Heart right ventricle (tissue), 16 donors: ENCODE measurements at regions of chr14 and their contacts with region 1.

Region 1: DNA sequence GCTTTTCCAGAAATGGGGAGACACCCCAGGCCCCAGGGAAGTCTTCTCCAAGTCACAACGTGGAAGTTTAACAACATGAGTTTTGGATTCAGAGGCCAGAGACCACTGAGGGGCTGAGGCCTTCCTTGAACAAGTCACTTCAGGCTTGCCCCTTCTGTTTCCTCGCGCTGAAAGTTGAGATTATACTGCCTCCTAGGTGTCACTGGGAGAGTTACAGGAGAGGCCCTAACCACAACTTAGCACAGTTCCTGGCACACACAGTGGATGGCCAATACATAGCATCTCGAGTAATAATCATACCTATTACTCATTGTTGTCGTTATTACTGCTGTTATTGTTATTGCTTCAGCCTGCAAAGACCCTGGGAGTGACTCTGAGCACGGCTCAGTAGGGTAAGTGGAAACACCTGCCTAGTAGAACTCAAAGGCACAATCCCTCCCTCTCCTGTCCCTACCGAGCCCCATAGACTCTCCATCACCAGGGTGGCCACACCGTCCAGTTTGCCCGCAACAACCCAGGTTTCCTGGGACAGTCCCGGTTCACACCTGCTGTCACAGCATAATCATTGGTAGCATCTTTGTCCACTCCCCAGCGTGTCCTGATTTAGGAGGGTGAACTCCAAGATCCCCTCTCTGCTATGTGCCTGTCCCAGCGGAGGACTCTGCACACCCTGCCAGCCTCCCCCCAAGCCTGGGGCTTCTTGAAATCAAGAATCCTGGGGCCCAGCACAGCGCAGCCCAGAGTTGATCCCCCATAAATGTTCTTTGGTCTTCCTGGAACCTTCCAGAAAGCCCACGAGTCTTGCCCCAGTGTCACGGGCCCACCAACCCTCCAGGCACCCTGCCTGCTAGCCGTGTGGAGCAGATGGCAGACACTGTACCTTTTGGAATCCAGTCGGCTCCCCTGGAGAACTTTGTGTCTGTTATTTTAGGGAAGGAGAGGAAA is 85.0 kb downstream of the SYNE3 start:
- DNase-seq: no peak
- ATAC-seq: peak; percentile 47 to 84 (median 60)
- H3K4me3 ChIP-seq: no peak overlapping the region
- H3K27ac ChIP-seq: peak overlapping the region in 6 of 10 donors; percentile 8 to 58 (median 37)
- H3K4me1 ChIP-seq: peaks cover 0 to 14% (median 5%) of the 10 kb centered on the region in 9 donors
- H3K27me3 ChIP-seq: no peaks in the 10 kb centered on the region
- CTCF ChIP-seq: peak; percentile 28 to 68 (median 55)

Region 2: DNA sequence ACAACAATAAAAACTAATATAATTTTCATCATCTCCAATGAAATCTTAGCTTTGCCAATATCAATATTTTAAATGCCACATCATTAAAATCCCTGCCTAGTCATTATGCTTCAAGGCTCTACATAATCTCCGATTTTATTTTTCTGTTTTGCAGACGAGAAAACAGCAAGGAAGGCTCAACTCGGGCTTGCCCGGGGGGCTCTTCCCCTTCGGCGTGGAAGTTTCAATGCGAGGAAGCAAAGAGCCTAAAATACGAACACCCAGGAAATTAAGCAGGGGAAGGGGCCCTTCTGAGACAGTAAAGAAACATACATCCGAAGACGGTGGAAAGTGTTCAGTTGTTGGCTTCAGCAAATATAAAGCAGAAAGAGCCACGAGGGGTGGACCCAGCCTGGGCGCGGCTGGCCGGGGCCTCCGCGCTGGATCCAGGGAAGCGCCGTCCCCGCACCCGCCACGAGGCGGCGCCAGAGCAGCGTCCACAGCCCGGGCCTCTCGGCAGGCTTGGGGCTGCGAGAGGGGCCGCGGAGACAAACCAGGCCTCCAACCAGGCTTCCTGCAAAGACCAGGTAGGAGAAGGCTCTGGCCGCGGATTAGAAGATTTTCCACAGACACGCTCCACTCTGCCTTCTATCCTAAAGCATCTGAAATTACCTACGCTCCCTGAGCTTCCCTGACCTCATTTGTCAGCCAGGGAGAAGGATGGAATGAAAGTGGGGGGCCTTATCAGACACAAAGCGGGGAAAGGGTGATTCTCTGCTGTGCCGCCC is 742.1 kb before region 1 on chr14:
- intact Hi-C with region 1: loop called (anchors 2 to 10 kb)
- DNase-seq: peak; percentile 38 to 68
- ATAC-seq: peak; percentile 89 to 95 (median 92)
- H3K4me3 ChIP-seq: peak overlapping the region in 4 of 10 donors; percentile 13 to 34 (median 16)
- H3K27ac ChIP-seq: no peak overlapping the region
- H3K4me1 ChIP-seq: peaks cover 0 to 10% (median 4%) of the 10 kb centered on the region in 9 donors
- H3K27me3 ChIP-seq: peaks cover 0 to 32% (median 20%) of the 10 kb centered on the region in 7 donors
- CTCF ChIP-seq: peak; percentile 85 to 99 (median 96)

Region 3: GRCh38 chr14:94904636-94905035 is 526.8 kb before region 1 on chr14:
- intact Hi-C with region 1: loop called in 2 of 10 experiments (anchors 5 to 10 kb)
- DNase-seq: no peak
- ATAC-seq: no peak
- H3K4me3 ChIP-seq: no peak overlapping the region
- H3K27ac ChIP-seq: no peak overlapping the region
- H3K4me1 ChIP-seq: no peaks in the 10 kb centered on the region
- H3K27me3 ChIP-seq: peaks cover 0 to 26% (median 5%) of the 10 kb centered on the region in 7 donors
- CTCF ChIP-seq: no peak

Region 4: DNA sequence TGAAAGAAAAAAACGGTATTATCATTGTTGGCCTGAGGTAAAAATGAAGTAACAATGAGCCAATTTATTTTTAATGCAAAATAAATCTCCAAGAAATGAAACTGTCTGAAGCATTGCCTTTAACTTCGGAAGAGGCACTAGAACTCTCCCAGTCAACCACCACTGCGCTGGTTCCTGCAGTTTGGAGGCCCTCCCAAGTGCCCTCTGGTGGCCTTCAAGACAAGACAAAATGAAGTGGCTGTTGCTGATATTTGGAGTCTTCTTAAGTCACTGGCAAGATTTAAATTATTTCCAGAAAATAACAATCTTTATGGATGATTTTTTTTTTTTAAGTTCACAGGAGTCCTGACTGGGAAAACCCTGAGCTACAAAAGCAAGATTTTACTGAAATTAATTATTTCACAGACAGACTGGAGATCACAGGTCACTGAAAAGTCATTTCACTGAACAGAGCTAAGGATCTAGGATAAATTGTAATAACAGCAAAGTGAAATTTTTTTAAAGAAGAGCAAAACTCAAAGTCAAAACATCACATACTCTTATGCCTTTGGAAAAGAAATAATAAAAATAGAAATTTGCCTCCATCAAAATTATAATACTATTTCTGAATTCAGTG is 332.4 kb before region 1 on chr14:
- intact Hi-C with region 1: loop called in 8 of 10 experiments (anchors 5 to 10 kb)
- DNase-seq: peak; percentile 57 to 65
- ATAC-seq: peak in 7 of 8 donors; percentile 66 to 85 (median 72)
- H3K4me3 ChIP-seq: no peak overlapping the region
- H3K27ac ChIP-seq: no peak overlapping the region
- H3K4me1 ChIP-seq: peaks cover 0 to 32% (median 17%) of the 10 kb centered on the region in 9 donors
- H3K27me3 ChIP-seq: no peaks in the 10 kb centered on the region
- CTCF ChIP-seq: peak; percentile 64 to 86 (median 75)

Region 5: DNA sequence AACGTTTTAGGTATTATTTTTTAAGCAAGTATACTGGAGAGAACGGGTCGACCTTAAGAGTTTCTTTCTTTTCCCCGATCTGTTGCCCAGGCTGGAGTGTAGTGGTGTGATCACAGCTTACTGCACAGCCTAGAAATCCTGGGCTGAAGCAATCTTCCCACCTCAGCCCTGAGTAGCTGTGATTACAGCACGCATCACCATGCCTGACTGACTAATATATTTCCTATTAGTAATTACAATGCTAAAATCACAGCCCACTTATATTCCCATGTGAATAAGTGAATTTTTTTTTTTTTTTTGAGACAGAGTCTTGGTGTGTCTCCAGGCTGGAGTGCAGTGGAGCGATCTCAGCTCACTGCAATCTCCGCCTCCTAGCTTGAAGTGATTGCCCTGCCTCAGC is 324.5 kb before region 1 on chr14:
- intact Hi-C with region 1: loop called in 4 of 10 experiments (anchors 5 to 10 kb)
- DNase-seq: no peak
- ATAC-seq: no peak
- H3K4me3 ChIP-seq: no peak overlapping the region
- H3K27ac ChIP-seq: no peak overlapping the region
- H3K4me1 ChIP-seq: no peaks in the 10 kb centered on the region
- H3K27me3 ChIP-seq: no peaks in the 10 kb centered on the region
- CTCF ChIP-seq: no peak

Region 6: DNA sequence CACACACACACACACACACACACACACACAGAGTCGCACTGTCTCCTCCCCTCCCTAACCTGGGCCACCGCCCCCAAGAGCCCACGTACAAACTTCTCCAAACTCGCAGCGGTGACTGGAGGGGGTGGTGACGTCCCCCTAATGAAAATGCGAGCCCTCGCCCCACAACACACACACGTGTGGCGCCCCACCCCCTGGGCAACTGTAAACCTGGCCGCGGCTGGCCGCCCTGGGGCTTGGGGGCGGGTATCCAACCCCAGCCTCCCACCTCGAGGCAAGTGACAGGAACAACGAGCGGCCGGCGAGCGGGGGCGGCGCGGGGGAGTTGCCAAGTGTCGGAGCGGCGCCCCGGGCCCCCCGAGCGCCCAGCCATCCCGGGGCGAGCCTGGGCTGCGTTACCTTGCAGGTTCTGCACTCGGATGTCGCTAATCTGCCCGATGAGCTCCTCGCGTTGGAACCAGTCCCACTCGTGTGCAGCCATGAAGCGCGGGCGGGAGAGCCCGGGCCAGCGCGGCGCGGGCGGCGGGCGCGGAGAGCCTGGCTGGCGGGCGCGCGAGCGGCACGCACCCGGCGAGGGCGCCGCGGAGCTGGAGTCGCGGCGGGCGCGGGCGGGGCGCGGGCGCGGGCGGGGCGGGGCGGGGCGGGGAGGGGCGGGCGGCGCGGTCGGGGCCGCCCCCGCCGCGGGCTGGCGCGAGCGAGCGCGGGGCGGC is 112.0 kb before region 1 on chr14 and contains the start of gene CLMN:
- intact Hi-C with region 1: loop called in 2 of 10 experiments (anchors 5 to 10 kb)
- DNase-seq: peak; percentile 21 to 44
- ATAC-seq: peak; percentile 30 to 78 (median 44)
- H3K4me3 ChIP-seq: peak within 1 kb of the TSS; percentile 77 to 96 (median 89)
- H3K27ac ChIP-seq: peak within 1 kb of the TSS; percentile 73 to 88 (median 83)
- H3K4me1 ChIP-seq: peaks cover 0 to 52% (median 19%) of the 10 kb centered on the region in 9 donors
- H3K27me3 ChIP-seq: peaks cover 0 to 13% (median 0%) of the 10 kb centered on the region in 7 donors
- CTCF ChIP-seq: no peak
- total RNA-seq, gene CLMN: 3.7 to 14.5 (median 5.9) TPM